CD14-positive monocyte (primary cell): ENCODE measurements at regions of chr9 and their contacts with region 1.

Region 1: DNA sequence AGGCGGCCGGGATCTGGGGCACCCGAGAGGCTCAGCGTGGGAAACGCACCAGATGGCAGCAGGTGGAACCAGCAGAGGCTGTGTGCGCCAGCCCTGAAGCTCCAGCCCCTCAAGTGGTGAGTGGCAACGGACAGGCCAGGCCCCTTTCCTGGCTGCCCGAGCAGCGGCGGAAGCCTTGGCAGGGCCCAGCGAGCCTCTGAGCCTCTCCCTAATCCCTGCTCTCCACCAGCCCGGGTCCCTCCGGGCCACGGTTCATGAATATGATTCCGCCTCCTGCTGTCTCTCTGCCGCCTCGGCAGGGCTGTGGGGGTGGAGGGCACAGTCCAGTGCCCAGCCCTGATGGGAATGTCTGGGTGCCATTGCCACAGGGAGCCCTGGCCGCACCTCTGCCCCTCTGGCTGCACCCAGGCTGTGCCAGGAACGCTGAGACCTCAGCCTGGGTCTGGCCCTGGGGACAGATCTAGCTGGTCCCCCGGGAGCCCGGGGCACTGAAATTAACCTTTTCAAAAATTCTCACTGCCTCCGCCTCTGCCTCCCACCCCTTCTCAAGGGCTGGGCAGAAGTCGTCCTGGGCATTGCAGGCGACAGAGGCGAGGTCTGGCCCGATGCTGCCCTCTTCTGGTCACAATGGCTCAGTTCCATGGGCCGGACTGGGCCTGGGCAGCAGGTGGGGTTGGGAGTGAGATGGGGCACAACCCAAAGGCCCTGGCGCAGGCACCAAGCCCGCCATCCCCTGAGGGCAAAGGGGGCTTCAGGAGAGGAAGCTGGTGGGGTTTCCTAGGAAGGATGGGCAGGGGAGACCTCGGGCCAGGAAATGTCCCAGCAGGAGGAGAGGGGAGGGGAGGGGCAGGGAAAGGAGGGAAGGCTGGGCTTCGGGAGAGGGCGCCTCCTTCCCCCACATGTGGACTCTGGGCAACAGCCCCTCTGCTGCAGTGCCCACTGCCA is 20.3 kb downstream of the CCDC187 start:
- DNase-seq: peak; percentile 54 to 63 (median 61)
- H3K4me3 ChIP-seq: no peak overlapping the region
- H3K4me3 Mint-ChIP-seq: peak overlapping the region in 1 of 2 donors; percentile 73
- H3K27ac ChIP-seq: no peak overlapping the region
- H3K27ac Mint-ChIP-seq: peak overlapping the region in 1 of 7 donors; percentile 74
- H3K4me1 ChIP-seq: no peaks in the 10 kb centered on the region
- H3K4me1 Mint-ChIP-seq: no peaks in the 10 kb centered on the region
- H3K27me3 ChIP-seq: no peaks in the 10 kb centered on the region
- H3K27me3 Mint-ChIP-seq: peaks cover 8 to 16% (median 14%) of the 10 kb centered on the region in 3 donors
- CTCF ChIP-seq: peak; percentile 84

Region 2: DNA sequence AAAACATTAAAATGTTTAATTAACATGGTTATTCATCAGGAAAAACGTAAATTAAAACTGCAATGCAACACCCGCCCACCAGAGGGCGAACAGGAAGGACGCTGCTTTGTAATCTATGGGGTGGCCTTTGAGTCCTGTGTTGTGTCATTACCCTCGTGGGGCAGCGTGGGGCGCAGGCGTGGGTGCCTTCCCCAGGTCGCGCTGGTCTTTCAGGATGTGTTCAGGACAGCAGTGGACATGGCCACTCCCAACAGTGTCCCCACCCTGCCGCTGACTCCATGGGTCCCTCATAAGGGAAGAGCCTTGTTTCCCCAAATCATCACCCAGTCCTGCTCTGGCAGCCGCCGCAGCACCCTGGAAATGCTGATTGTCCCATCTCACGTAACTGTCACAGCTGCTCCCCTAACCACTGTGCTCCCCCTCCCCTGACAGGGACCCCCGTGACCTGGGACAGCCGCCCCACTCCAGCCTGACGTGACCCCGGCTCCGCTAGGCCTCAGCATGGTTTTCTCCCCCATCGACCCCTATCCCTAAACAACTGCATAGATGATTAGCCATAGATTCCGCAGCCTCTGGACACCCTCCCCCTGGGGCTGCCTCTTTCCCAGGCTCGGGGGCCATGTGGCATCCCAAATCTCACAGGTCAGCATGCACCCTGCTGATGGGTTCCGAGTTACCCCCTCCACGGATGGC is 680.6 kb before region 1 on chr9:
- intact Hi-C with region 1: loop called in 1 of 2 experiments (anchors 10 kb)
- DNase-seq: peak; percentile 16 to 46 (median 37)
- H3K4me3 ChIP-seq: no peak overlapping the region
- H3K4me3 Mint-ChIP-seq: no peak overlapping the region
- H3K27ac ChIP-seq: no peak overlapping the region
- H3K27ac Mint-ChIP-seq: no peak overlapping the region
- H3K4me1 ChIP-seq: no peaks in the 10 kb centered on the region
- H3K4me1 Mint-ChIP-seq: no peaks in the 10 kb centered on the region
- H3K27me3 ChIP-seq: peaks cover 0 to 3% of the 10 kb centered on the region in 2 donors
- H3K27me3 Mint-ChIP-seq: peaks cover 2 to 11% (median 10%) of the 10 kb centered on the region in 3 donors
- CTCF ChIP-seq: peak; percentile 89

Region 3: DNA sequence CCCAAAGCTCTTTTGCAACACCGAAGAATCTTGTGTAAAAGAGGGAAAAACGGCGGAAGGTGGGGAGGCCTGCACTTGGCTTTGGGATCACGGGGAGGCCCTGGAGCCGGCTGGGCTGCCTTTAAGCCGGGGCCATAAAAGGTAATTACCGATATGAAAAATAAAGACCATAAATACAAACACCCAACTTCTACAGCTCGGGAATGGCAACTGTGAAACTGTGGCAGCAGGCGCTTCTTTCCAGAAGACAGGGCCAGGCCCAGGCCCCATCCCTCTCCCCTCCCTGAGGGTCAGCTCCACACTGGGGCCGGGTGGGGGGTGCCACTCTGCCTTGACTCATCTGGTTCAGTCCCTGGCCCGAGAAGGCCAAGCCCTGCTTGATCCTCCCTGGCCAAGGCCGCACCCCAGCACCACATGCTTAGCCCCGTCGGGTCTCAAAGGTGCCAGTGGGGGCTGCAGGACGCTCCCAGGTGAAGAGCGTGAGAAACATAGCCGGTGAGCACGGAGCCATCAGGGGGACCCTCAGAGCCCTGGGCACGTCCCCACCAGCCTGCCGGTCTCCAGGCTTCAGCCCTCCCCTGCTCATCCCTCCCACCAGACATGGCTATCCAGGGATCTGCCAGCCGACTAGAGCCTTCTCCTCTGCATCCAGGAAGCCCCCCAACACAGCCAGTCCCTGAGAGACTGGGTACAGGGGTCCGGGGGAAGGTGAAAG is 223.2 kb before region 1 on chr9:
- intact Hi-C with region 1: no loop called
- DNase-seq: peak in 1 of 3 donors; percentile 50
- H3K4me3 ChIP-seq: peak overlapping the region in 1 of 3 experiments; percentile 45
- H3K4me3 Mint-ChIP-seq: peak overlapping the region; percentile 9 to 59
- H3K27ac ChIP-seq: peak overlapping the region; percentile 55 to 64
- H3K27ac Mint-ChIP-seq: peak overlapping the region; percentile 69 to 91 (median 79)
- H3K4me1 ChIP-seq: peaks cover 60 to 75% of the 10 kb centered on the region in 2 donors
- H3K4me1 Mint-ChIP-seq: peaks cover 74% of the 10 kb centered on the region
- H3K27me3 ChIP-seq: no peaks in the 10 kb centered on the region
- H3K27me3 Mint-ChIP-seq: peaks cover 0 to 3% (median 0%) of the 10 kb centered on the region in 3 donors
- CTCF ChIP-seq: no peak

Region 4: GRCh38 chr9:136170006-136170901 is 113.3 kb before region 1 on chr9:
- intact Hi-C with region 1: loop called in 1 of 2 experiments (anchors 5 kb)
- DNase-seq: peak in 2 of 3 donors; percentile 2 to 17
- H3K4me3 ChIP-seq: no peak overlapping the region
- H3K4me3 Mint-ChIP-seq: no peak overlapping the region
- H3K27ac ChIP-seq: no peak overlapping the region
- H3K27ac Mint-ChIP-seq: no peak overlapping the region
- H3K4me1 ChIP-seq: no peaks in the 10 kb centered on the region
- H3K4me1 Mint-ChIP-seq: no peaks in the 10 kb centered on the region
- H3K27me3 ChIP-seq: no peaks in the 10 kb centered on the region
- H3K27me3 Mint-ChIP-seq: peaks cover 3 to 14% (median 10%) of the 10 kb centered on the region in 3 donors
- CTCF ChIP-seq: peak; percentile 75